ENCODE measurements at regions of chr2 and their contacts with region 1.

Region 1: DNA sequence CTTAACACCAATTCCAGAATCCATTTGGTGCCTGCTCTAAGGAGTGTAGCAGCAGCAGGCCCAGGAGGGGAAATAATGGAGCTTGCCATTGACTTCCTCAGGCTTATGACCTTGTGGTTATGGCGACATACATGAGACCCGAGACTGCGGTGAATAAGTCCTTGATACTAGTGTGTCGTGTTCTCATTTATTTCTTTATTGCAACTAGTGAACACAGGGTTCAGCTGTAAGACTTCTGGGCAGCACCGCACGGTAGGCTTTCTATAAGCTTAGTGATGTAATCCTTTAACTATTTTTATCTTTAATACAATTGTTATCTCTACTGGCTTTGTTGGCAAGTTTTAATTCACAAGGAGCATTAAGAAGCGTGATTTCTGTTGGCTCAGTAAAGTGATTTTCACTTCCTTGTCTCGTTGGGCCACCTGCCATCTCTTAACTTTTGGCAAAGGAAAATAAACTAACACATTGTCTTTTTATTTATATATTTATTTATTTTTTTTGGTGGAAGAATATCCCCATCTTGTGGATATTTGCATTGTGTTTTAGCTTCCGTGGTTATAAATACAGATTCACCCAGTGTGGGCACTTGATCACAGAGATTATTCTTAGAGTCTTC is 139.8 kb downstream of the LTBP1 start:
- DNase-seq: peak; percentile 36
- H3K4me3 Mint-ChIP-seq: no peak overlapping the region
- H3K27ac Mint-ChIP-seq: peak overlapping the region; percentile 30
- H3K4me1 Mint-ChIP-seq: peaks cover 17% of the 10 kb centered on the region
- H3K27me3 Mint-ChIP-seq: no peaks in the 10 kb centered on the region
- CTCF ChIP-seq: peak; percentile 32

Region 2: GRCh38 chr2:32553829-32554432 is 532.6 kb before region 1 on chr2:
- CTCF ChIA-PET with region 1: no interaction called
- intact Hi-C with region 1: loop called (anchors 5 kb)
- DNase-seq: peak; percentile 2
- H3K4me3 Mint-ChIP-seq: no peak overlapping the region
- H3K27ac Mint-ChIP-seq: no peak overlapping the region
- H3K4me1 Mint-ChIP-seq: no peaks in the 10 kb centered on the region
- H3K27me3 Mint-ChIP-seq: no peaks in the 10 kb centered on the region
- CTCF ChIP-seq: no peak

Region 3: GRCh38 chr2:32772638-32773447 is 313.7 kb before region 1 on chr2:
- CTCF ChIA-PET with region 1: interaction called, 4 read pairs
- intact Hi-C with region 1: loop called (anchors 1 kb)
- DNase-seq: peak; percentile 6
- H3K4me3 Mint-ChIP-seq: no peak overlapping the region
- H3K27ac Mint-ChIP-seq: no peak overlapping the region
- H3K4me1 Mint-ChIP-seq: no peaks in the 10 kb centered on the region
- H3K27me3 Mint-ChIP-seq: no peaks in the 10 kb centered on the region
- CTCF ChIP-seq: peak; percentile 74

Region 4: DNA sequence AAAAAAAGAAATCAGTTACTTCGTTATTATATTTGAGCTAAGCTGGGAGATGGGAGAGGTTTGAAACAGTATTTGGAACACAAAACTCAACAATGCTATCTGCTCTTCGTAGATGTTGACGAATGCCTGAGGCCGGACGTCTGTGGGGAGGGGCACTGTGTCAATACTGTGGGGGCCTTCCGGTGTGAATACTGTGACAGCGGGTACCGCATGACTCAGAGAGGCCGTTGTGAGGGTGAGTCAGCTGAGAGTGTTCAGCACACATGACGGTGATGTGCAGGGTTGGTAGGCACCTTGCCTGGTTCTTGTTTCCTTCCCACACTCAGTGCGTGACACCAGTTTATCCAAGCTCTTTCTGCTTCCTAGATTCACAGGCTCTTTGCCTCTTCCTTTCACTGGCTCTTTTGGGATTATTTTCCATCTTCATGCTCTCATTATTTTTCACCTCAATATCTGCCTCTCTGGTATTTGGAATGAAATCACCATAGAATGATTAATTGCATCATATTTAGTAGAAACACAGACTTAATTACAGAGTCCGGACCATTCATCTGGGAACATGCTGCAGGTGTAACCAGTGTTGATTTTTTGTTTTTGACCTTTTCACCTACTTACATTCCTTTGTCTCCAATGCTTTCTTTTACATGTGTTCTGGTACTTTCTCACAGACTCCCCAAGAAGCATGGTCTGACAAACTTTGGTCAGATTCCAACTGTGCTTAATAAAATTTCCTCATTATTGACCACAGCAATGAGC is 189.4 kb after region 1 on chr2:
- CTCF ChIA-PET with region 1: no interaction called
- intact Hi-C with region 1: loop called (anchors 5 kb)
- DNase-seq: peak; percentile 89
- H3K4me3 Mint-ChIP-seq: peak overlapping the region; percentile 31
- H3K27ac Mint-ChIP-seq: peak overlapping the region; percentile 98
- H3K4me1 Mint-ChIP-seq: peaks cover 40% of the 10 kb centered on the region
- H3K27me3 Mint-ChIP-seq: no peaks in the 10 kb centered on the region
- CTCF ChIP-seq: no peak

Region 5: DNA sequence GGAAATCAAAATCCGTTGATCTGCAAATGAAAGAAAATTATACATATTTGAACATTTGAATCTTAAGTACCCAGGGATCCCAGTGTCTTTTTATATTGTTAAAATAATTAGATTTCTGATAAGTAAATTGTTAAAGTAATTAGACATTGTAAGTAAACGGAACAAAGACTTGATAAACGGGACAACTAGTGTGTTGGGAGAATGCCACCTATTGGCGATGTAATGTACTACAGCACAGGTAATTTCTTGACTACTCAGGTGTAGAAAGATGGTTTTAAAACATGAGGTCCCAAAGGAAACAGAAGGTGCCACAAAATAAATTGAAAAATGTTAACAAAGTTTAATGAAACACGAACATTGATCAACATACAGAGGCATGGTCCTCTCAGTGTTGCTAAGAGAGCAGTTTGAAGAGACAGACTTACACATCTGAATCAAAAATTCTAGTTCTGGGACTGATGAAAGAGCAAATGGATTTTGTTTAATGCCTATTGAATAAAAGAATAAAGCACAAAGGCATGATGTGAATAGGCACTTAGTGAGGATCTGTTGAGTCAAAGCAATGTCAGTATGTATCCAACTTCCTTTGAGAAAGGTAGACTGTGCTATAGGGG is 286.5 kb after region 1 on chr2:
- CTCF ChIA-PET with region 1: interaction called, 3 read pairs
- intact Hi-C with region 1: loop called (anchors 5 kb)
- DNase-seq: peak; percentile 49
- H3K4me3 Mint-ChIP-seq: no peak overlapping the region
- H3K27ac Mint-ChIP-seq: no peak overlapping the region
- H3K4me1 Mint-ChIP-seq: no peaks in the 10 kb centered on the region
- H3K27me3 Mint-ChIP-seq: no peaks in the 10 kb centered on the region
- CTCF ChIP-seq: peak; percentile 61

Region 6: GRCh38 chr2:33583194-33583938 is 496.9 kb after region 1 on chr2:
- CTCF ChIA-PET with region 1: no interaction called
- intact Hi-C with region 1: loop called (anchors 10 kb)
- DNase-seq: peak; percentile 7
- H3K4me3 Mint-ChIP-seq: no peak overlapping the region
- H3K27ac Mint-ChIP-seq: no peak overlapping the region
- H3K4me1 Mint-ChIP-seq: no peaks in the 10 kb centered on the region
- H3K27me3 Mint-ChIP-seq: no peaks in the 10 kb centered on the region
- CTCF ChIP-seq: peak; percentile 47